ENCODE measurements at regions of chr16 and their contacts with region 1.

Region 1: GRCh38 chr16:30429678-30430427 is at the start of gene DCTPP1:
- DNase-seq: peak; percentile 91
- H3K4me3 ChIP-seq: peak within 1 kb of the TSS; percentile 93
- H3K27ac ChIP-seq: no peak within 1 kb of the TSS
- H3K27me3 ChIP-seq: no peaks in the 10 kb centered on the region
- CTCF ChIP-seq: peak; percentile 71
- polyA plus RNA-seq, gene DCTPP1: 34.1 and 34.7 TPM in 2 replicates

Region 2: DNA sequence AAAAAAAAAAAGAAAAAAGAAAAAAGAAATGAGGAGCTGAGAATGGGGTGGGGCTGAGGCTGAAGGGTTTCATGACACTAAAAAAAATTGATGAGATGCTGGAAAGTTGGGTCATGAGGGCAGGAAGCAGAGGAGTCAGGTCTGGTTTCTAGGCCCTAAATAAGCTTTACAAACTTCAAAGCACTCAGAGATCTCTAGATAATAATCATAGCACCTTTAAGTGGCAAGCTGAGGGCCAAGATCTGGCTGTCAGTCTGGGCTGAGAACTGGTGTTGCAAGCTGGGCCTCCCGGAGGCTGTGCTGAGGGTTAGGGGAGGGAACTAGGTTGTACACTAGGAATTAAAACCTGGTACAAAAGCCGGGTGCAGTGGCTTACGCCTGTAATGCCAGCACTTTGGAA is 121.9 kb after region 1 on chr16:
- CTCF ChIA-PET with region 1: interaction called, 4 read pairs
- POLR2A ChIA-PET with region 1: interaction called, 11 read pairs
- DNase-seq: no peak
- H3K4me3 ChIP-seq: no peak overlapping the region
- H3K27ac ChIP-seq: no peak overlapping the region
- H3K27me3 ChIP-seq: no peaks in the 10 kb centered on the region
- CTCF ChIP-seq: no peak

Region 3: DNA sequence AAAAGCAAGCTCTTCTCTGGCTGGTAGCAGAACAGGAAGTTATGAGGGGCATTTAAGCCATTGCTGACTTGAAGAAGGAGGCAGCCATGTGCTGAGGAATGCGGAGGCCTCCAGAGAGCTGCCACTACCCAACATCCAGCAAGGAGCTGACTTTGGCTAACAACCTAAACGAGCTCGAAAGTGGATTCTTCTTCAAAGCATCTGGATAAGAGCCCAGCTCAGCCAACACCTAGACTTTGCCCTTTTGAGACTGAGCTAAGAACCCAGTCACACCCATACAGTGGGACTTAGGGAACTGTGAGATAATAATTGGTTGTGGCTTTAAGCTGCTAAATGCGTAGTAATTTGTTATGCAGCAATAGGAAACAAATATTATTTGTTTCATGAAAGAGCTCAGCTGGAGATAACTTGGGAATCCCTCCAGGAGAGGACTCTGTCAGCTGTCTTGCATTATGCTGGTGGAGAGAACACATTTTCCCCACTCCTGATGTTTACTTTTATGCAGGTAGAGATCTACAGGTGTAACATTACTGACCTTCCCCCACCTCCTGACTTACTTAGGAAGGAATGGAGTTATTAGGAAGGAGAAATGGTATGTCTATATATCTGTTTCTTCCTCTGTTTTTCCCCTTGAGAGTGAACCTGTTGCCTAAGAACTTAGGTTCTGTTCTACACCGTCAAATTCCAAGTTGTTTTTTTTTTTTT is 409.8 kb after region 1 on chr16:
- CTCF ChIA-PET with region 1: no interaction called
- POLR2A ChIA-PET with region 1: no interaction called
- DNase-seq: no peak
- H3K4me3 ChIP-seq: no peak overlapping the region
- H3K27ac ChIP-seq: no peak overlapping the region
- H3K27me3 ChIP-seq: no peaks in the 10 kb centered on the region
- CTCF ChIP-seq: no peak